Activated CD8-positive, alpha-beta memory T cell treated with anti-CD3 and anti-CD28 coated beads, Interleukin-2, amount 10 ng/mL, durations not matched to agents 7 days and 5 days (primary cell): ENCODE measurements at regions of chr17 and their contacts with region 1.

Region 1: GRCh38 chr17:6651357-6651918 is at the starts of genes C17orf100 and MED31:
- DNase-seq: peak; percentile 96
- ATAC-seq: peak; percentile 95
- H3K4me3 Mint-ChIP-seq: peak within 1 kb of the TSS; percentile 93
- H3K27ac Mint-ChIP-seq: peak within 1 kb of the TSS; percentile 99
- H3K4me1 Mint-ChIP-seq: peaks cover 54% of the 10 kb centered on the region
- H3K27me3 Mint-ChIP-seq: peaks cover 18% of the 10 kb centered on the region
- total RNA-seq, gene C17orf100: 1.1 to 1.4 TPM
- total RNA-seq, gene MED31: 18.3 TPM

Region 2: GRCh38 chr17:6567529-6568183 is 83.8 kb before region 1 on chr17:
- CTCF ChIA-PET with region 1: no interaction called
- DNase-seq: no peak
- ATAC-seq: no peak
- H3K4me3 Mint-ChIP-seq: no peak overlapping the region
- H3K27ac Mint-ChIP-seq: no peak overlapping the region
- H3K4me1 Mint-ChIP-seq: no peaks in the 10 kb centered on the region
- H3K27me3 Mint-ChIP-seq: peaks cover 2% of the 10 kb centered on the region

Region 3: DNA sequence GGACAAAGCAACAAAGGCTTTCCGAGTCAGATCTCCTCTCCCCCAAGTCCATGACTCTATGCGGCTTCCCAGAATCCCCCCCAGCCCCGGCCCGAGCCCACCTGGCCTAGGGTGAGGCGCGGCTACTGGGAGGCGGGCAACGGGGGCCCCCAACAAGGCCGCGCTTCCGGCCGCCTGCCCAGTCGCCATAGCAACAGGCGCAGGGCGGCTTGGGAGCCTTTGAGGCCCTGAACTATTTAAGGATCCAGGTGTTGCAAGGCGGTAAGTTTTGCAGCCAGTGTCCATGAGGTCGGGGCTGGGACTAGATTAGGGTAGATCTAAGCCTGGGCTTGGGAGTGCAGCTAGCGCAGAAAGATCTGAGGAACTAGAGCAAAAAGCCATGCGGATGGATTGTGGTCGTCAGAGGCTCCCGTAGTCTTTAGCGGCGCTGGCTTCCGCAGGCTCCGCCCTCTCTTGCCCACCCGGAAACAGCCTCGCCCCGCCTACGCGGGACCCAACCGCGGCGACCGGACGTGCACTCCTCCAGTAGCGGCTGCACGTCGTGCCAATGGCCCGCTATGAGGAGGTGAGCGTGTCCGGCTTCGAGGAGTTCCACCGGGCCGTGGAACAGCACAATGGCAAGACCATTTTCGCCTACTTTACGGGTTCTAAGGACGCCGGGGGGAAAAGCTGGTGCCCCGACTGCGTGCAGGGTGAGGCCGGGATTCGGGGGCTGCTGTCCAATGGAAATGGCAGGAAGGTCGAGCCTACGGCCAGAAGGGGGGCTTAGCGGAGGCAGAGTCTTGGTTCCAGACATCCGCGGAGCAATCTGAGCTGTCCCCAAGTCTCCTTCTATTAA is 10.7 kb before region 1 on chr17 and contains the starts of genes KIAA0753 and TXNDC17:
- CTCF ChIA-PET with region 1: interaction called, 20 read pairs
- DNase-seq: peak; percentile 97
- ATAC-seq: peak; percentile 88
- H3K4me3 Mint-ChIP-seq: peak within 1 kb of the TSS; percentile 87
- H3K27ac Mint-ChIP-seq: peak within 1 kb of the TSS; percentile 91
- H3K4me1 Mint-ChIP-seq: peaks cover 58% of the 10 kb centered on the region
- H3K27me3 Mint-ChIP-seq: no peaks in the 10 kb centered on the region
- total RNA-seq, gene KIAA0753: 16.5 to 18.0 TPM
- total RNA-seq, gene TXNDC17: 69.6 to 71.6 TPM